Right lobe of liver (tissue), 6 donors: ENCODE measurements at regions of chr17 and their contacts with region 1.

Region 1: GRCh38 chr17:29111816-29112499 is 68.2 kb downstream of the MYO18A start:
- DNase-seq: peak; percentile 70 to 76 (median 74)
- ATAC-seq: peak; percentile 40 to 57 (median 50)
- H3K4me3 ChIP-seq: no peak overlapping the region
- H3K27ac ChIP-seq: peak overlapping the region in 1 of 3 donors; percentile 7
- H3K4me1 ChIP-seq: peaks cover 0 to 57% (median 29%) of the 10 kb centered on the region in 4 donors
- H3K27me3 ChIP-seq: no peaks in the 10 kb centered on the region
- CTCF ChIP-seq: peak; percentile 81 to 93 (median 90)
- POLR2A ChIP-seq: no peak

Region 2: GRCh38 chr17:28967221-28968140 is 144.5 kb before region 1 on chr17:
- intact Hi-C with region 1: loop called (anchors 2 to 5 kb)
- DNase-seq: no peak
- ATAC-seq: peak in 1 of 4 donors; percentile 2
- H3K4me3 ChIP-seq: no peak overlapping the region
- H3K27ac ChIP-seq: no peak overlapping the region
- H3K4me1 ChIP-seq: peaks cover 0 to 41% (median 9%) of the 10 kb centered on the region in 4 donors
- H3K27me3 ChIP-seq: no peaks in the 10 kb centered on the region
- CTCF ChIP-seq: no peak
- POLR2A ChIP-seq: no peak

Region 3: DNA sequence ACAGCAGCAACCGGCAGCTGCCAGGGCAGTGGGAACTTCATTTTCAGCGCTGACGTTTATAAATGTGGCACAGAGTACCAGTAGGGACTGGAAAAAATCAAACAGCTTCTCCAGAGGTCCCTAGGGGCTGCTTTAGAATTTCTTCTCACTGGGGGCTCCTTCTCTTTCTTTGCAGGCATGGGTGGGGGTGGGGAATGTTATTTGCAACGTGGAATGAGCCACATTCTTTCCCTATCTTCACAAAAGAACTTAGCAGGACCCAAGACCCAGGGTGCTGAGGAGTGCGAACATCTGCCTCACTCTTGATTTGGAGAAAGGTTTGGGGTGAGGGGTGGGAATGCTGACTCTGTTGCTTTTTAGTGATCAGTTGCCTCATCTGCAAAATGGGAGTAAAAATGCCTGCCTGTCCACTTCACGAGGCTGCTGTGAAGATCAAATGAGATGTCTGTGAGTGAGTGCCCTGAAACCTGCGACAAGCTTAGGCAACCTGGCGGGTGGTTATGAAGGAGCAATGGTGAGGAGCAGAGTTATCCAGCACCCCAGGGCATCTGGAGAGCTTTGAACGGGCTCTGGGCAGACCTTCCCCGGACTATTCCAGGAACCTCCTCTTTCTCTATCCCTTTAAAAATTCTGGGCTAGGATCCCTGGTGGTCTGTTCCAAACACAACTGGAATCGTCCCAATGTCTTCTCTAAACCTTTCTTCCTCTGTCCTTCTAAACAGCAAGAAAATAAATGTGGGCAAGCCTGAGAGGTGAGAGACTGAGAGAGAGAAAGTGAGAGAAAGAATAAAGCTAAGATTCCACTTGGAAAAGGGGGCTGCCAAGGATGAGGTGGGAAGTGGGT is 79.7 kb before region 1 on chr17:
- intact Hi-C with region 1: no loop called
- DNase-seq: no peak
- ATAC-seq: no peak
- H3K4me3 ChIP-seq: no peak overlapping the region
- H3K27ac ChIP-seq: no peak overlapping the region
- H3K4me1 ChIP-seq: no peaks in the 10 kb centered on the region
- H3K27me3 ChIP-seq: no peaks in the 10 kb centered on the region
- CTCF ChIP-seq: no peak
- POLR2A ChIP-seq: no peak

Region 4: DNA sequence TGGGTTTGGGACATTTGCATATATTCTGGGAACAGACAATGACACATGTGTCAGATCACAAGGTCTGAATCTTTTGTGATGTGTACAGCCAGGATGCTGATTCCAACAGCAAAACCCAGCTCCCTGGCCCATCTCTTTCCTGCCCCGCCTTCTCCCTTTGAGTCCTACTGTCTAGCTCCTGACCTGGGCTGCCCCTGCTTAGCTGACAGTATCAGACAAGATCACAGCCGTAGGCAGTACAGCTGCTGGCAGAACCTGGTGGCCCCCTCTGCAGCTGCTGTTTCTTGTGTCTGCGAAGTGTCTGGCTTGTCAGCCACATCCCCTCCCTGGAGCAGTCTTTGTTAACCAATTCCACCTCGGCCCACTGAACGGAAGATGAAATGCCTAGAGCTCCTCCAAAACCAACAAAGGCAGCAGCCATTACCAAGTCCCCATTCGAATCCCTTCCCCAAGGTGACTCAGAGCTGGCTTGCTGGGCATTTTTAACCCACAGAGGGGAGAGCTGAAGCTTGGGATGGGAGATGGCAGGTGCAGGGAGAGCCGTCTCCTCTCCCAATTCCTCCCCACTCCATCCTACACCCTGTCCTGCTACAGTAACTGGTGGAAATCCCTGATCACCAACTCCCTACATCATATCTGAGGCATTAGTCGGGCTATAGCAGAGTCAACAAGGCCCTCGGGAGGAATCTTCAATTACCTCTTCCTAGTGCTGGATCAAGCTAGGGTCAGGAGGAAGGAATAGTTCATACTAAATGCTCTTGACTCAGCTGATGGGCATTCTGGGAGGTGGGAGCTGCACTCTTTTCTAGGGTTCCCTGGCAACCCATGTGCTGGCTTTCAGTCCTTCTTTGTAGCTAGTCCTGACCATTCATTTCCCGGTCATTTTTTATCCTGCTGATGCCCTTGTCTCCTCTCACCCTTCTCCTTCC is 63.3 kb before region 1 on chr17:
- intact Hi-C with region 1: loop called in 1 of 2 experiments (anchors 5 kb)
- DNase-seq: no peak
- ATAC-seq: no peak
- H3K4me3 ChIP-seq: no peak overlapping the region
- H3K27ac ChIP-seq: no peak overlapping the region
- H3K4me1 ChIP-seq: peaks cover 0 to 59% (median 13%) of the 10 kb centered on the region in 4 donors
- H3K27me3 ChIP-seq: no peaks in the 10 kb centered on the region
- CTCF ChIP-seq: no peak
- POLR2A ChIP-seq: no peak

Region 5: DNA sequence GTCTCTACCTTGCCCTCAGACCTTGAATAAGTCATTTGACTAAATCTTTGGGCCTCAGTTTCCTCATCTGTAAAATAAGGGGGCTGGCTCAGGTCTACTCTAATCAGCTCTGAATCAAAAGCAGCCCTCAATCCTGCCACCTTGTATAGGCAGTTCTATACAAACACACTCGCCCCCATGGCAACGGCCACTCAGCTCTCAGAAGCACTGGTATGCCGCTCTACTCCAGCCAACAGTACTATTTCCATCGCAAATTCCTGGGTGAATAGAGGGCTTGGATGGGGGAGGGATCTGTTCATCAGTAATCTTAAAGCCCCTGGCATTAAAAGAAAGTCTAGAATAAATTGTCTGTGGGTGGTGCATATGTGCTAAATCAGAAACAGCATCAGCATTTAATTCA is 257.0 kb after region 1 on chr17:
- intact Hi-C with region 1: no loop called
- DNase-seq: no peak
- ATAC-seq: no peak
- H3K4me3 ChIP-seq: no peak overlapping the region
- H3K27ac ChIP-seq: no peak overlapping the region
- H3K4me1 ChIP-seq: no peaks in the 10 kb centered on the region
- H3K27me3 ChIP-seq: no peaks in the 10 kb centered on the region
- CTCF ChIP-seq: no peak
- POLR2A ChIP-seq: no peak